CD14-positive monocyte (primary cell): ENCODE measurements at regions of chr10 and their contacts with region 1.

Region 1: GRCh38 chr10:132637477-132638129 is 100.0 kb downstream of the INPP5A start:
- DNase-seq: peak; percentile 49 to 57 (median 53)
- H3K4me3 ChIP-seq: no peak overlapping the region
- H3K4me3 Mint-ChIP-seq: peak overlapping the region in 1 of 2 donors; percentile 64
- H3K27ac ChIP-seq: no peak overlapping the region
- H3K27ac Mint-ChIP-seq: peak overlapping the region in 1 of 7 donors; percentile 7
- H3K4me1 ChIP-seq: peaks cover 4% of the 10 kb centered on the region in 2 donors
- H3K4me1 Mint-ChIP-seq: peaks cover 12% of the 10 kb centered on the region
- H3K27me3 ChIP-seq: no peaks in the 10 kb centered on the region
- H3K27me3 Mint-ChIP-seq: peaks cover 0 to 2% (median 0%) of the 10 kb centered on the region in 3 donors
- CTCF ChIP-seq: peak; percentile 71

Region 2: DNA sequence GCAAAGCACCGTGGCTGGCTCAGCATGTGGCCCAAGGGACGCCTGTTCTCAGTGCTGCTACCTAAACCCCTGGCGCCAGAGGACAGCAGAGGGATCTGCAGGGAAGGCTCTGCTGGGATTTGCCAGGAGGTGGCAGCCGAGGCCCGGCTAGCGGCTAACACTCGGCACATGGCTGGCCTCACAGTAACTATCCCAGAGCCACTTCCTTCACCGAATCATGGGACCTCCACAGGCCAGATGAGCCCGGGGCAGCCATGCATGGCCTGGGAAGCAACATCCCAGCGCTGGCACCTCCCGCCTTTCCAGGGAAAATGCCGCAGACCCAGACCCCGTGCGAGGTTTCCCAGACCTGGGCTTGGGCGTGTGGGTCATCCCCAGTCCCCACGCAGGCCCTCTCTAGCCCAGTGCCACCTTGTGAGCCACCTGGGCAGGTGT is 414.4 kb before region 1 on chr10:
- intact Hi-C with region 1: loop called in 1 of 2 experiments (anchors 10 kb)
- DNase-seq: peak; percentile 74 to 84 (median 80)
- H3K4me3 ChIP-seq: no peak overlapping the region
- H3K4me3 Mint-ChIP-seq: no peak overlapping the region
- H3K27ac ChIP-seq: no peak overlapping the region
- H3K27ac Mint-ChIP-seq: no peak overlapping the region
- H3K4me1 ChIP-seq: peaks cover 38 to 45% of the 10 kb centered on the region in 2 donors
- H3K4me1 Mint-ChIP-seq: peaks cover 40% of the 10 kb centered on the region
- H3K27me3 ChIP-seq: no peaks in the 10 kb centered on the region
- H3K27me3 Mint-ChIP-seq: peaks cover 1 to 3% (median 2%) of the 10 kb centered on the region in 3 donors
- CTCF ChIP-seq: peak; percentile 91

Region 3: DNA sequence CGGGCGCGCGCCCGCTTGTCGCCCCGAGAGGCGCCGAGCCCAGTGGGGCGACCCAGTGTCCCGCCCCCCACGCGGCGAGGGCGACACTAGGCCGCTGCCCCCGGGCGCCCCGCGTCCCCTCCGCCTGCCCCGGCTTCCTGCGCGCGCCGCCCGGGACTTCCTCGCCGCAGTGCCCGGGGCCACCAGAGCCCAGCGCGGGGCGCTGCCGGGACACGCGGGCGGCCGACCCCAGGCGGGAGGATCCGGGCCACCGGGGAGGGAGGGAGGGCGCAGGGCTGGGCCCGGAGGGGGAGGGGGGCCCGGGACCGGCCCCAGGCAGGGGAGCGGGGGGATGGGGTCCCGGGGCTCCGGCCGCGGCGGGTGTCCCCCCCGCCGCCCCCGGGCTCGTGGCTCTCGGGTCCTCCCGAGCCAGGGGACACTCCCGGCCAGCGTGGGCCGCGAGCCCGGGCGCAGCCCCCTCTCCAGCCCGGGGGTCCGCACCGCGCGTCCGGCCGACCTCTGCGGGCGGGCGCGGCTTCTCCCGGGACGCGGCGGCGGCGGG is 241.0 kb before region 1 on chr10:
- intact Hi-C with region 1: loop called in 1 of 2 experiments (anchors 10 kb)
- DNase-seq: peak in 2 of 3 donors; percentile 62 to 67
- H3K4me3 ChIP-seq: peak overlapping the region; percentile 38 to 76 (median 55)
- H3K4me3 Mint-ChIP-seq: no peak overlapping the region
- H3K27ac ChIP-seq: peak overlapping the region; percentile 56 to 76
- H3K27ac Mint-ChIP-seq: peak overlapping the region in 1 of 7 donors; percentile 36
- H3K4me1 ChIP-seq: peaks cover 61 to 74% of the 10 kb centered on the region in 2 donors
- H3K4me1 Mint-ChIP-seq: peaks cover 58% of the 10 kb centered on the region
- H3K27me3 ChIP-seq: no peaks in the 10 kb centered on the region
- H3K27me3 Mint-ChIP-seq: peaks cover 5 to 10% (median 7%) of the 10 kb centered on the region in 3 donors
- CTCF ChIP-seq: peak; percentile 33

Region 4: DNA sequence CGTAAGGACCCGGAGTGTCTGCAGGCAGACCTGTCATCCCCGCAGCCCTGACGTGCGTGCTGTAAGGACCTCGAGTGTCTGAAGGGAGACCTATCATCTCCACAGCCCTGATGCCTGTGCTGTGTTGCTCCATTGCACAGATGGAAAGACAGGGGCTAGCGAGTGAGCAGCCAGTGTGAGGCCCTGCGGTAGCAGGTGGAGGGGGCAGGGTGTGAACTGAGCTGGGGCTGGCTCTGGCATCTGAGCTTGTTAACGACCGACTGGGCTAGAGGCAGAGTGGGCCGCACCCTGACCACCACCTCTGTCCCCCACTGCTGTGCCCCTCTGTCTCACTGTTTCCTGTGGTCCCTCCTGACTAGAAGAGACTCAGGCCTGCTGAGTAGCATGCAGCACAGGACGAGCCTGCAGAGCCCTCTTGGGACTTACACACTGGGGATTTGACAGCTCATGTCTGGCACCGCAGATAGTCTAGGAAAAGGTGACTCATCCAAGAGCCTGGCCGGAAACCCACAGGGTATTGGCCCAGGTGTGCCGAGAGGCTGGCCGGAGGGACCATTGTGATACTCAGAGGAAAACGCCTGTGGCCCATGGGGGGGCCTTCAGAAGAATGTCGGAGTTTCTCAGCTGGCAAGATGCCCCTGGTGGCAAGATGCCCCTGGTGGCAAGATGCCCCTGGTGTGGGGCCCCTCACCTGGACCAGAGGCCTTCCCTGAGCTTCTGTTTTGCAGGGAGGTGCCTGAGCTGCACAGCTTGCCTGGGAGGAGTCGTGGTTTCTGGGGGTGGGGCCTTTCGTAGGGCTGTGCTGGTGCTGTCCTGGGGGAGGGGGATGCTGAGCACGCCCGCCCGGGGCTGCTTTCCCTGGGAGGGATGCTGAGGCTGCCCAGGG is 65.7 kb before region 1 on chr10:
- intact Hi-C with region 1: loop called in 1 of 2 experiments (anchors 10 kb)
- DNase-seq: peak; percentile 44 to 69 (median 62)
- H3K4me3 ChIP-seq: peak overlapping the region in 1 of 3 experiments; percentile 16
- H3K4me3 Mint-ChIP-seq: peak overlapping the region; percentile 2 to 64
- H3K27ac ChIP-seq: peak overlapping the region in 1 of 2 donors; percentile 46
- H3K27ac Mint-ChIP-seq: peak overlapping the region in 4 of 7 donors; percentile 26 to 85 (median 85)
- H3K4me1 ChIP-seq: peaks cover 52 to 53% of the 10 kb centered on the region in 2 donors
- H3K4me1 Mint-ChIP-seq: peaks cover 2% of the 10 kb centered on the region
- H3K27me3 ChIP-seq: no peaks in the 10 kb centered on the region
- H3K27me3 Mint-ChIP-seq: peaks cover 0 to 6% (median 0%) of the 10 kb centered on the region in 3 donors
- CTCF ChIP-seq: no peak

Region 5: DNA sequence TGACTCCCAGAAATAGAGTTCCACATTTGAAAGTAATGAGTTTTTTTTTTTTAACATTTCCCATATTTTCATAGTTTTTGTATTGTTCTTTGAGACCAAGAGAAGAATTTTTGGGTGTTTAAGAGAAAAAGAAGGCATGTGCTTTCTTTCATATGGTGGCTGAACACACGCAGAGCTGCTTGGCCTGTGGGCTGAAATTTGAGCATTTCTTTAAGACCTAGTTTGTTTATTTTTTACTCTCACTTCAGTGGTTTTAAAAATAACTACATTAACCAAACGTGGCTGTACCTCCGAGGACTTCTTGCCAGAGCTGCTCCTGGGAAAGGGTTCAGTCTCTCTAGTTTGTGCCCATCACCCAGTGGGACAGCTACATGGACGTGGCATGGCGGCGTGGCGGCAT is 41.7 kb before region 1 on chr10:
- intact Hi-C with region 1: loop called in 1 of 2 experiments (anchors 5 kb)
- DNase-seq: no peak
- H3K4me3 ChIP-seq: no peak overlapping the region
- H3K4me3 Mint-ChIP-seq: no peak overlapping the region
- H3K27ac ChIP-seq: no peak overlapping the region
- H3K27ac Mint-ChIP-seq: peak overlapping the region in 1 of 7 donors; percentile 3
- H3K4me1 ChIP-seq: peaks cover 44 to 56% of the 10 kb centered on the region in 2 donors
- H3K4me1 Mint-ChIP-seq: peaks cover 63% of the 10 kb centered on the region
- H3K27me3 ChIP-seq: no peaks in the 10 kb centered on the region
- H3K27me3 Mint-ChIP-seq: peaks cover 0 to 3% (median 2%) of the 10 kb centered on the region in 3 donors
- CTCF ChIP-seq: no peak